Heart right ventricle (tissue), 16 donors: ENCODE measurements at regions of chr5 and their contacts with region 1.

Region 1: DNA sequence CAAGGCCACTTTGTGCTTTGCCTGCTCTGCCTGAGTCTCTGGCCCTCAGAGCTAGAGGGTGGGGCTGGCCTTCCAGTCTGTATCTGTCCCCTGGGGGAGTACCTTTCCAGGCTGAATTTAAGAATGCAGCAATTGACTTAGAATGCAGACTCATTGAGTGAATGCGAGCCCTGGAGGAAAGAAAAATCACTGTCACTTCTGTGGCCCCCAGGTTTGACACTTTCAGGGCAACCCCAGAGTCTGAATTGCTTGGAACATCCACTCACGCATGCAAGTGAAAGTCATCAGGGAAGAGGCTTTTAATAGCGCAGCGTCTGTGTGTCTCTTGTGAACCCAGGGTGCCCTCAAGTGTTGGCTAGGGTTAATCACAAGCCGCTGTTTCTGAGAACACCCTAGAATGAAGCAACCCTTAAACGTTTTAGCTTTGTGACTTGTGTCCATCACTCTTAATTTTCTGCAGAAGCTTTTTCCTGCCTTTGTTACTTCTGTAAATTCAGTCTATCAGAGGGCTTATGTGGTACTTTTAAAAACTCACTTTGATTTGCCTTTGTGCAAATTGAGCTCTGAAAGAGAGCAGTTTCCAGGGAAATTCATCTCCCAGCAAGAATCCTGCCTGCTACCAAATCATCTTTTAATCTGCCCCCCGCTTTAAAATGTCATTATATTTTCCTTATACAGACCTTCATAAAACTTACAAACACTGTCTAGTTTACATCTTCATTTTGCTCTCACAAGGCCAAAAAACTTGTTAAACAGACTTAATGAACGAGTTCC is 146.8 kb upstream of the IQGAP2 start:
- DNase-seq: peak in 1 of 2 donors; percentile 56
- ATAC-seq: peak; percentile 73 to 98 (median 92)
- H3K4me3 ChIP-seq: no peak overlapping the region
- H3K27ac ChIP-seq: no peak overlapping the region
- H3K4me1 ChIP-seq: peaks cover 0 to 9% (median 4%) of the 10 kb centered on the region in 9 donors
- H3K27me3 ChIP-seq: peaks cover 0 to 7% (median 0%) of the 10 kb centered on the region in 7 donors
- CTCF ChIP-seq: peak; percentile 18 to 75 (median 68)

Region 2: DNA sequence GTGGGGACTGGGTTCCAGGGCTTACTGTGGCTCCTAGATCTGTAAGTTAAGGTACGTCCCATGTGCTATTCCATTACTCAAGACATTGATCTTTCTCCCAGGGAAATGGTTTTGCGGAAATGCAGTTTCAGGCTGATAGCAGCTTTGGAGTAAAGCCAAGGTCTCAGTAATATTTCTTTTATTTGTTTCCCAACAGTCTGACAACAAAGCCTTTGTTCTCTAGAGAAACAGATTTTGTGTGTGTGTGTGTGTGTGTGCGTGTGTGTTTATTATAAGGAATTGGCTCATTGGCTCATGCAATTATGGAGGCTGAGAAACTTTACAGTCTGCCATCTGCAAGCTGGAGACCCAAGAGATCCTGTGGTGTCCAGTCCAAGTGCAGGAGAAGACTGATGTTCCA is 527.0 kb before region 1 on chr5:
- intact Hi-C with region 1: loop called in 2 of 10 experiments (anchors 10 kb)
- DNase-seq: no peak
- ATAC-seq: no peak
- H3K4me3 ChIP-seq: no peak overlapping the region
- H3K27ac ChIP-seq: no peak overlapping the region
- H3K4me1 ChIP-seq: no peaks in the 10 kb centered on the region
- H3K27me3 ChIP-seq: peaks cover 0 to 5% (median 0%) of the 10 kb centered on the region in 7 donors
- CTCF ChIP-seq: no peak

Region 3: GRCh38 chr5:75734913-75735789 is 521.2 kb before region 1 on chr5:
- intact Hi-C with region 1: loop called in 7 of 10 experiments (anchors 1 to 10 kb)
- DNase-seq: peak in 1 of 2 donors; percentile 13
- ATAC-seq: peak in 6 of 8 donors; percentile 38 to 90 (median 64)
- H3K4me3 ChIP-seq: no peak overlapping the region
- H3K27ac ChIP-seq: no peak overlapping the region
- H3K4me1 ChIP-seq: no peaks in the 10 kb centered on the region
- H3K27me3 ChIP-seq: peaks cover 0 to 15% (median 0%) of the 10 kb centered on the region in 7 donors
- CTCF ChIP-seq: peak in 7 of 9 donors; percentile 44 to 66 (median 56)